ENCODE measurements at regions of chr1 and their contacts with region 1.

Region 1: DNA sequence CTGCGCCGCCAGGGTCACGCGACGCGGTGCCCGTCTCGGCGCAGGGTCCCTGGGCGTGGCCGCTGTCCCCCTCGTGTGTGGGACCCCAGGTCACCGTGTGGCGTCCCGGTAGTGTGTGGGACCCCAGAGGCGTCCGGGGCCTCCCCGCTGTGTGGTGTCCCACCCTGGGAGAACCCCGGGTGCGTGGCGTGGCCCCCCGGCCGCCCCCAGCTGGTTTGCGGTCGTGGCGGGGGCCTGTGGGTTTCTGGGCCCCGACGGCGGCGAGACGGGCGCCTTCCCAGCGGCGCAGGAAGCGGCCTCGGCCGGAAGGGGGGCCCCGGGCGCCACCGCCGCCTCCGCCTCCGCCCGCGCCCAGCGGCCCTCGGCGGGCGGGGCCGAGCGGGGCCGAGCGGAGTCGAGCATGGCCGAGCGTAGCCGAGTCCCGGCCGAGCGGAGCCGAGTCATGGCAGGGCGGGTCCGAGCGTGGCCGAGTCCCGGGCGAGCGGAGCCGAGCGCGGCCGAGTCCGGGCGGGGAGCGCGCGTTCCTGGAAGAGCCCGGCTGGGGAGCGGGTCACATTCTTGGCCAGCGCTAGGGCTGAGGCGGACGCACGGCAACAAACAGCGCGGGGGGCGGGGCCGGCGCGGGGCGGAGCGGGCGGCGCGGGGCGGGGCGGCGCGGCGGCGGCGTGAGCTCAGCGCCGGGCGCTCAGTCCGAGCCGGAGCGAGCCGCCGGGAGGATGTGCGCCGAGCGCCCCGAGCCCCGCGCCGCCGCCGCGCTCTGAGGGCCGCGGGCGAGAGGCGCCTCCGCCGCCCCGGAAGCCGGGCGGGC is 569 bp upstream of the SKI start:
- DNase-seq: peak; percentile 96 to 98
- ATAC-seq: peak; percentile 86 to 94 (median 89)
- H3K4me3 ChIP-seq: peak overlapping the region; percentile 64 to 86 (median 72)
- H3K27ac ChIP-seq: peak overlapping the region; percentile 96 to 100 (median 100)
- H3K4me1 ChIP-seq: peaks cover 19 to 47% (median 44%) of the 10 kb centered on the region in 9 donors
- H3K27me3 ChIP-seq: no peaks in the 10 kb centered on the region
- CTCF ChIP-seq: peak in 1 of 9 donors; percentile 12

Region 2: GRCh38 chr1:2212542-2213491 is 14.7 kb before region 1 on chr1:
- intact Hi-C with region 1: loop called in 2 of 10 experiments (anchors 1 to 2 kb)
- DNase-seq: peak; percentile 93 to 97
- ATAC-seq: peak; percentile 42 to 81 (median 76)
- H3K4me3 ChIP-seq: peak overlapping the region; percentile 11 to 50 (median 43)
- H3K27ac ChIP-seq: peak overlapping the region; percentile 94 to 100 (median 98)
- H3K4me1 ChIP-seq: peaks cover 33 to 73% (median 55%) of the 10 kb centered on the region in 9 donors
- H3K27me3 ChIP-seq: no peaks in the 10 kb centered on the region
- CTCF ChIP-seq: peak in 8 of 9 donors; percentile 6 to 53 (median 45)

Region 3: GRCh38 chr1:2300851-2301606 is 73.5 kb after region 1 on chr1:
- intact Hi-C with region 1: loop called in 6 of 10 experiments (anchors 2 to 10 kb)
- DNase-seq: peak; percentile 84 to 85
- ATAC-seq: peak; percentile 46 to 76 (median 63)
- H3K4me3 ChIP-seq: peak overlapping the region in 9 of 10 donors; percentile 3 to 49 (median 42)
- H3K27ac ChIP-seq: peak overlapping the region; percentile 28 to 97 (median 88)
- H3K4me1 ChIP-seq: peaks cover 24 to 85% (median 58%) of the 10 kb centered on the region in 9 donors
- H3K27me3 ChIP-seq: no peaks in the 10 kb centered on the region
- CTCF ChIP-seq: no peak

Measured in heart right ventricle (tissue), 16 donors.